ENCODE measurements at regions of chr17 and their contacts with region 1.

Region 1: DNA sequence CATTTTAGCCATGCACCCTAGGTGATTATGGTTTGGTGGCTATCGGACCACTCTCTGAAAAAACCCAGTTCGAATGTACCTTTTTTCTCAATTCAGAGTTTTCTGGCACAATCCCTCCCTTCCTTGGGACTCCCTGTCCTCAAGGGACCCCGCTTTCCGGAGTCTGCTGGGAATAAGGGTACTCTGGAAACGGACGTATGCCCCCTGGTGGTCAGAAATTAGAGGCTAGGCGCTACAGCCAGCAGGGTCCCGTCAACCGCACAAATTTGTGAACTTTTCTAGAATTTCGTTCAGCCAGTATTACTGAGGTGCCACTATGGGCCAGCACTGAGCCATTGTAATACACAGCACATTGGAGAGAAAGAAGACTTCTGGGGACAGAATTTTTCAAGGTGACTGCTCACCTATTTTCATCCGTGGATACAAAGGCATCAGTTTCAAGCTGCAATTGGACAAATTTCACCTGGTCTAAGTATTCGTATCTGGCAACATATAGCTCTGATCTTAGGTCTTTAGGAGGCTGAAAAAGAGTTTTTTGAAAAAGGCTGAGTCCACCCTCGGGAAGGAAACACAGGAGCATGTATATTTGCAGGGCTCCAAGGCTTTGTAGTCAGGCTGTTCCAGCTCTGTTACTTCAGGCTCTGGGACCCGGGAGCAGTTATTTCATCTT is 27.1 kb upstream of the CRYBA1 start:
- DNase-seq: peak; percentile 84 to 88
- ATAC-seq: peak; percentile 91
- H3K4me3 ChIP-seq: no peak overlapping the region
- H3K27ac ChIP-seq: no peak overlapping the region
- H3K4me1 ChIP-seq: no peaks in the 10 kb centered on the region
- H3K27me3 ChIP-seq: no peaks in the 10 kb centered on the region

Region 2: GRCh38 chr17:28937044-28937729 is 282.3 kb before region 1 on chr17:
- intact Hi-C with region 1: no loop called
- DNase-seq: no peak
- ATAC-seq: no peak
- H3K4me3 ChIP-seq: no peak overlapping the region
- H3K27ac ChIP-seq: no peak overlapping the region
- H3K4me1 ChIP-seq: peaks cover 3 to 6% of the 10 kb centered on the region in 2 donors
- H3K27me3 ChIP-seq: no peaks in the 10 kb centered on the region

Region 3: DNA sequence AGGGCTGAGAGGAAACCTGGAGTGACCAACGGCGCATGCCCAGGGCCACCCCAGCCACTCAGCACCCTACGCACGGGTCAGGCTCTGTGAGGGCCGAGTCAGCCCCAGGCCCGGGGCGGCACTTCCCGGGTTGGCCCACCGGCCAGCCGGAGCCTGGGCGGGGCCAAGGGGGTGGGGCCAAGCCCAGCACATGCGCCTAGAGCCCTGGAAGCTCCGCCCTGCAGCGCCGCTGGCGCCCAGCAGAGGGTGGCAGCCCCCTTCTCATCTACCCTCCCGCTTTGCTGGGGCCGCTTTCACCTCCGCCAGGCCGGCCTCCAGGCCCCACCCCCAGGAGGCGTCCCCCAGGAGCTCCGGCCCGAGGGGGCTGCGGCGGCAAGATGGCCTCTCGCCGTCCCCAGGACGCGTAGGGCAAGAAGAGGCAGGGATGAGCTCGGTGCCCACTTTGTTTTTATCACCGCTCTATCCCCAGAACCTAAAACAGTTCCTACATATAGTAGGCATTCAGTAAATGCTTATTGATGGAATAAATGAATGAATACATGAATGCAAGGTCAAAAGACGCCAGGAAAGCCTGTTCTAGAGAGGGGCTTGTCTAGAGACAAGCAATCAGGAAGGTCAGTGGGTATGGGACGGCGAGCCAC is 70.6 kb before region 1 on chr17:
- intact Hi-C with region 1: loop called (anchors 1 to 5 kb)
- DNase-seq: peak; percentile 97 to 98
- ATAC-seq: peak; percentile 99
- H3K4me3 ChIP-seq: peak overlapping the region in 1 of 2 donors; percentile 37
- H3K27ac ChIP-seq: peak overlapping the region in 1 of 2 donors; percentile 65
- H3K4me1 ChIP-seq: no peaks in the 10 kb centered on the region
- H3K27me3 ChIP-seq: no peaks in the 10 kb centered on the region